ENCODE measurements at regions of chrX and their contacts with region 1.

Region 1: DNA sequence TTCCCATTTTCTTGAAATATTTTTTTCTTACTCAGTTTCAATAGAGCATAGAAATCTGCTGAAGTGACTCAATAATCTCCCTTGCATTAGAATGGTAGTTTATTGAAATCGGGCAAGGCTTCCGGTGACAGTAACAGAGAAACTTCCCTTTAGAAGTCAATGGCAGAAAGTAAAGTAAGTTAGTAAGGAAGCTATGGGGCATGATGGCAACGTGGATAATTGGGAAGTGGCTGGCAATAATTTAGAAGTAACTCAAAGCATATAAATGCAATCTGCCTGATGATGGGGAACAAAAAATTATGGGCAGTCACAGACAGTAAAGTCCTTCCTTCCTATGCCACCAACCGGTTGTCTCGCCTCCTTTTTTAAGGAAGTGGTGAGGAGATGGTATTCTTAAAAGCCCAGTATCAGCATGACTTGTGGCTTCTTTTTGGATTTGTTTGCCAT is 7.6 kb downstream of the CYBB start:
- DNase-seq: no peak
- ATAC-seq: peak; percentile 62
- H3K4me3 ChIP-seq: peak overlapping the region; percentile 33
- H3K27ac ChIP-seq: peak overlapping the region; percentile 85
- H3K4me1 ChIP-seq: no peaks in the 10 kb centered on the region; the same call in 1 of the 2 replicates
- H3K27me3 ChIP-seq: no peaks in the 10 kb centered on the region
- CTCF ChIP-seq: no peak
- EP300 ChIP-seq: peak in 1 of 2 experiments; percentile 64; a peak in 1 of 4 replicates
- POLR2A ChIP-seq: no peak
- RAD21 ChIP-seq: no peak

Region 2: DNA sequence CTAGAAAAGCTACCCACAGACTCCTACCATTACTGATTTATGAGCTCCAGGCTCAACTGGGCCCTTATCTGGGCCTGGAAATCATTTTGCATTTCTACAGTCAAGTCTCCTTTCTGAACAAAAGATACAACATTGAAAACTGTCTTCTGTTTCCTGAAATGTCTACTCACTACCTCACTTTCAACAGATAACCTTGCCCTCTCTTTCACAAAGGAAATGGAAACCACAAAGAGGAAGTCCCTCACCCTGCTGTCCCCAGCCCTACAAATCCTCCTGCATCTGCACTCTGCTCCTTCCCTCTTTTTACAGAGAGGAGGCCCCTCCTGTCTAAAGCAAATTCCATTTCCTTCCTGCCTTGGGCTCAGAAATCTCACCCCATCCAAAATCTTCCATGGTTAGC is 32.4 kb before region 1 on chrX:
- CTCF ChIA-PET with region 1: interaction called, 10 read pairs
- POLR2A ChIA-PET with region 1: interaction called, 7 read pairs
- RAD21 ChIA-PET with region 1: interaction called, 9 read pairs
- SMC1A ChIA-PET with region 1: interaction called, 72 read pairs
- in situ Hi-C with region 1: no loop called
- intact Hi-C with region 1: loop called (anchors 2 kb)
- DNase-seq: peak; percentile 67
- ATAC-seq: peak; percentile 92
- H3K4me3 ChIP-seq: peak overlapping the region; percentile 10; the same call in 1 of the 2 replicates
- H3K27ac ChIP-seq: peak overlapping the region; percentile 87
- H3K4me1 ChIP-seq: peaks cover 32% of the 10 kb centered on the region
- H3K27me3 ChIP-seq: no peaks in the 10 kb centered on the region
- CTCF ChIP-seq: no peak
- EP300 ChIP-seq: peak in 1 of 2 experiments; percentile 57; a peak in 1 of 4 replicates
- POLR2A ChIP-seq: no peak
- RAD21 ChIP-seq: no peak

Region 3: DNA sequence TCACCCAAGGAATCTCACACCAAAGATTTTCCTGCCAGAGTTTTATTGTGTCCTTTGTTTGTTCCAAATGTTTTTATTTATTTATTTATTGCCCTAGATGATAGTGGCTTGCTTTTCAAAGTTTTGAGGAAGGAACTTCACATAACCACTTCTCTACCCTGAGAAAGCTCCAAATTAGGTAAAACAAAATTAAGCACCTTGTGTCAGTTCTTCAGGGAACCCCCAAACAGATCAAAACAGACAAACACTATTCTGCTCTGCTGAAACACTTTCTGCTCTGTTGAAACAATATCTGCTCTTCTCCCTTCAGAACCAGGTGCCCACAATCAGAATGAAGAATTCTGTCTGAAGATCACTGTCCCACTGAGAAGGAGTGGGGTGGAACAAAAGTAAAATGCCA is 24.0 kb before region 1 on chrX:
- CTCF ChIA-PET with region 1: interaction called, 6 read pairs
- POLR2A ChIA-PET with region 1: interaction called, 3 read pairs
- RAD21 ChIA-PET with region 1: interaction called, 26 read pairs
- SMC1A ChIA-PET with region 1: interaction called, 24 read pairs
- in situ Hi-C with region 1: no loop called
- intact Hi-C with region 1: no loop called
- DNase-seq: no peak
- ATAC-seq: peak; percentile 69
- H3K4me3 ChIP-seq: no peak overlapping the region
- H3K27ac ChIP-seq: peak overlapping the region; percentile 33; the same call in 1 of the 2 replicates
- H3K4me1 ChIP-seq: peaks cover 5% of the 10 kb centered on the region; the same call in 1 of the 2 replicates
- H3K27me3 ChIP-seq: no peaks in the 10 kb centered on the region
- CTCF ChIP-seq: no peak
- EP300 ChIP-seq: no peak
- POLR2A ChIP-seq: no peak
- RAD21 ChIP-seq: no peak

Region 4: DNA sequence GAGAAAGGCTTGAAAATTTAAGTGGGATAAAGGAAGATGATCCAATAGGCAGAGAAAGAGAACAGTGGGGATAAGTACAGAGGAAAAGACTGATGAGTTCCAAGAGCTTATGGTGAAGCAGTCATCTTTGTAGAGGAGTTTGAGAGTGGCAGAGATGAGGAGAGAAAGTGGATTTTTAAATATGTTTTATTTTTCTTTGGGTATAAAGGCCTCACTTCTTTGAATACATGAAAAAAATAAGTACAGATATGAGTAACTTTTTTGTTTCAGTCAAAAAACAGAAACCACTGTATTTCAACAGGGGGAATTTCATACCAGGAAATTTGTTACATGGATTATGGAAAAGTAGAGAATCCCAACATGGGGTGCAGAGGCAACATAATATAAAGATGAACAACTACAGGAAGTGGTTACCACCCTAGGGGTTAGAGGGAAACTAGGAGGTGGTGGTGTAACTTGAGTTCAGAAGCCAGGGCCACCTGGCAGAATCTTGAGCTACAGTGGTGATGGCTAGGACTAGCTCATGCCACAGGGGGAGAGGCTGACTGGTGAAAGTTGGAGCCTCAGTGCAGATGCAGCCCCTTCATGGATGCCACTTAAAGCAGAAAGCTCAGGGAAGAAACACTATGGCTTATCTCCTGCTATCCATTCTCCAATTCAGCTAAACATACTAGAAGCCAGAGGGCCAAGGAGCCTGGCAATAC is 11.0 kb before region 1 on chrX:
- CTCF ChIA-PET with region 1: interaction called, 5 read pairs
- POLR2A ChIA-PET with region 1: interaction called, 21 read pairs
- RAD21 ChIA-PET with region 1: interaction called, 18 read pairs
- SMC1A ChIA-PET with region 1: interaction called, 12 read pairs
- in situ Hi-C with region 1: no loop called
- intact Hi-C with region 1: no loop called
- DNase-seq: no peak
- ATAC-seq: peak; percentile 80
- H3K4me3 ChIP-seq: peak overlapping the region; percentile 23; the same call in 1 of the 2 replicates
- H3K27ac ChIP-seq: peak overlapping the region; percentile 85
- H3K4me1 ChIP-seq: peaks cover 22% of the 10 kb centered on the region
- H3K27me3 ChIP-seq: no peaks in the 10 kb centered on the region
- CTCF ChIP-seq: no peak
- EP300 ChIP-seq: no peak
- POLR2A ChIP-seq: no peak
- RAD21 ChIP-seq: no peak

Region 5: DNA sequence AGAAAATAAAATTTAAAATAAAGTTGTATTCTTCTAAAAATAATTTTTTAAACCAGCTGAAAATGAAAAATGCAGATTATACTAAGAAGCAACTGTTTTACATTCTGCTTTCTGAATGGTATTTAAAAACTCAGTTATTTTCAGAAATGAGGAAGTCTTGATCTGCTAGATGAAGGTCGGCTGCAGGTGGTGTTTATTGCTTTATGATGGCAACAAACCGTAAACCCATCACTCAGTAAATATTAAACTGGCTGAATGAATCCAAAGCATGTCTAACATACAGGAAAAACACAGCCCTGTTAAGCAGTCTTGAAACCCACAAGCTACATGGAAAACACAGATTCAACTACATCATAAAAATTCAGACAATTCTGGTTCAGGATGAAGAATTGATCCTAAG is 30.6 kb after region 1 on chrX:
- CTCF ChIA-PET with region 1: interaction called, 73 read pairs
- POLR2A ChIA-PET with region 1: interaction called, 8 read pairs
- RAD21 ChIA-PET with region 1: interaction called, 34 read pairs
- SMC1A ChIA-PET with region 1: interaction called, 138 read pairs
- in situ Hi-C with region 1: no loop called
- intact Hi-C with region 1: loop called (anchors 5 kb)
- DNase-seq: no peak
- ATAC-seq: peak; percentile 45
- H3K4me3 ChIP-seq: no peak overlapping the region
- H3K27ac ChIP-seq: peak overlapping the region; percentile 37; the same call in 1 of the 2 replicates
- H3K4me1 ChIP-seq: peaks cover 20% of the 10 kb centered on the region
- H3K27me3 ChIP-seq: no peaks in the 10 kb centered on the region; a peak in 1 of 4 replicates
- CTCF ChIP-seq: no peak
- EP300 ChIP-seq: no peak
- POLR2A ChIP-seq: no peak
- RAD21 ChIP-seq: no peak

Region 6: GRCh38 chrX:38275615-38276014 is 488.2 kb after region 1 on chrX:
- CTCF ChIA-PET with region 1: no interaction called
- POLR2A ChIA-PET with region 1: no interaction called
- RAD21 ChIA-PET with region 1: no interaction called
- SMC1A ChIA-PET with region 1: no interaction called
- in situ Hi-C with region 1: no loop called
- intact Hi-C with region 1: loop called (anchors 10 kb)
- DNase-seq: peak; percentile 13
- ATAC-seq: peak; percentile 46
- H3K4me3 ChIP-seq: no peak overlapping the region
- H3K27ac ChIP-seq: no peak overlapping the region
- H3K4me1 ChIP-seq: peaks cover 2% of the 10 kb centered on the region
- H3K27me3 ChIP-seq: no peaks in the 10 kb centered on the region
- CTCF ChIP-seq: no peak
- EP300 ChIP-seq: no peak
- POLR2A ChIP-seq: no peak
- RAD21 ChIP-seq: no peak

Region 7: GRCh38 chrX:38365954-38366353 is 578.5 kb after region 1 on chrX:
- CTCF ChIA-PET with region 1: no interaction called
- POLR2A ChIA-PET with region 1: no interaction called
- RAD21 ChIA-PET with region 1: no interaction called
- SMC1A ChIA-PET with region 1: no interaction called
- in situ Hi-C with region 1: no loop called
- intact Hi-C with region 1: no loop called
- DNase-seq: no peak
- ATAC-seq: no peak
- H3K4me3 ChIP-seq: no peak overlapping the region
- H3K27ac ChIP-seq: no peak overlapping the region
- H3K4me1 ChIP-seq: no peaks in the 10 kb centered on the region
- H3K27me3 ChIP-seq: 0 out of 4 replicates have a peak, but pooled peaks cover 0 to 2% of the 10 kb centered on the region in 2 experiments
- CTCF ChIP-seq: no peak
- EP300 ChIP-seq: no peak
- POLR2A ChIP-seq: no peak
- RAD21 ChIP-seq: no peak

Measured in GM12878 (cell line).